ENCODE measurements at regions of chr17 and their contacts with region 1.

Region 1: DNA sequence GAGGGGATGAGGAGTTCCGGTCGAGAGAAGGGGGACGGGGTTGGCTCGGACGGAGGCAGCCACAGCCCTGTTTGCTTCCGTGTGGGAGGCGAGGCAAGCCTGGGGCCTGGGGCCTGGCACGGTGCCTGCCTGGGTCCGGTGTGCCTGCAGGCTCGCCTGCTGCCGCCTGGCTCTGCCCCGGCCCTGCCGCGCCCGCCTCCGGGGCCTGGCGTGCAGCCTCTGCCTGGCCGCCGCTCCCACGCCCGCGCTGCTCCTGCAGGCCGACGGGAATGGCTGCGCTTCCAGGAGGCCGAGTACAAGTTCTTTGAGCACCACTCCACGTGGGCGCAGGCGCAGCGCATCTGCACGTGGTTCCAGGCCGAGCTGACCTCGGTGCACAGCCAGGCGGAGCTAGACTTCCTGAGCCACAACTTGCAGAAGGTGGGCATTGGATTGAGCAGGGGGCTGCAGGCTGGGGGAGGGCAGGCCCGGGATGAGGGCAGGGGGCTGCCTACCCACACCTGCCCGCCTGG is 53.1 kb downstream of the MRC2 start:
- DNase-seq: peak in 1 of 2 donors; percentile 54
- H3K4me3 ChIP-seq: peak overlapping the region in 2 of 3 donors; percentile 19 to 55
- H3K27ac ChIP-seq: peak overlapping the region; percentile 35 to 80
- H3K4me1 ChIP-seq: no peaks in the 10 kb centered on the region
- H3K27me3 ChIP-seq: no peaks in the 10 kb centered on the region
- CTCF ChIP-seq: peak in 1 of 3 donors; percentile 8
- POLR2A ChIP-seq: no peak

Region 2: DNA sequence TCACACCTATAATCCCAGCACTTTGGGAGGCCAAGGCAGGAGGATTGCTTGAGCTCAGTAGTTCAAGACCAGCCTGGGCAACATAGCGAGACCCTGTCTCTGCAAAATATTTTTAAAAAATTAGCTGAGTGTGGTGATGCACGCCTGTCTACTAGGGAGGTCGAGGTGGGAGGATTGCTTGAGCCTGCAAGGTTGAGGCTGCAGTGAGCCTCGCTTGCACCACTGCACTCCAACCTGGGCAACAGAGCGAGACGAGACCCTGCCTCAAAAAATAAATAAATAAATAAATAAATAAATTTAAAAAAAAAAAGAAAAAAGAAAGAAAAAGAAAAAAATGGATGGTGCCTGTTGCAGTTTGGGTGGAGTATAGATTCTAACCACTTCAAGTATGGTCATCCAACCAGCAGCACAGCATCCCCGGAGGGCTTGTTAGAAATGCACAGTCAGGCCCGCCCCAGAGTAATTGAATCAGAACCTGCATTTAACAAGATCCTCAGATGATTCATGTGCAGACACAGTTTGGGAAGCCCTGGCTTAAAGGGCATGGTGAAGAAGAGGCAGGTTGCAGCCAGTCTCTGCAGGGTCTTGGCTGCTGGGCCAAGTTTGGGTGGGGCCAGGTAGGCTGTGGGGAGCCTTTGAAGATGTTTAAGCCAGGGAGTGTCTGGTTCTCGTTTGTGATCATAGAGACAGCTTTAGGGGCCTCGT is 12.4 kb before region 1 on chr17:
- intact Hi-C with region 1: loop called (anchors 1 kb)
- DNase-seq: no peak
- H3K4me3 ChIP-seq: no peak overlapping the region
- H3K27ac ChIP-seq: no peak overlapping the region
- H3K4me1 ChIP-seq: no peaks in the 10 kb centered on the region
- H3K27me3 ChIP-seq: no peaks in the 10 kb centered on the region
- CTCF ChIP-seq: no peak
- POLR2A ChIP-seq: no peak

Region 3: DNA sequence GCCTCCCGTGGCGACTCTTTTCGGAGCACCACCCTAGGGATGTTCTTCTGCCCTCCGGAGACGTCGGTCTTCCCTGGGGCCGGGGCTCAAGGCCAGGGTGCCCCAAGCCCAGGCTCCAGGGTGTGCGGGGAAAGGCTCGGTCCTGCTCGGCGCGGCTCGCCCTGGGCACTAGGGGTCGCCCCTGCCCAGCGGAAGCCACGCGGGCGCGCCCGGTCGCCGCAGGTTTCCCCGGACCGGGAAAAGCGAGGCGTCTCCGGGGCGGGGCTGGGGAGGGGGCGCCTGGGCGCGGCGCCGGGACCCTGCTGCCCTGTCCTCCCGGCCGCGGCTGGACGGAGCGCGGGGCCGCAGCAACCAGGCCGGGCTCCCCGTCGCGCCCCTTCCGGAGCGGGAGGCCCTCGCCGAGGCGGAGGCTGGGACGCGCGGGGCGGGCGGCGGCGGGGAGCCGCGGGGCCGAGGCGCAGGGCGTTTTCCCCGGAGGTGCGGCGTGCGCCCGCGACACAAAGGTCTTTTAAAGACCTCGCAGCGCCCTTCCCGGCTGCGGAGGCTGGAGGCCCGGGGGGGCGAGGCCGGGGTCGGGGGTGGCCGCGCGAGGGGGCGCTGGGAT is 23.3 kb after region 1 on chr17:
- intact Hi-C with region 1: no loop called
- DNase-seq: peak in 1 of 2 donors; percentile 78
- H3K4me3 ChIP-seq: peak overlapping the region; percentile 57 to 98 (median 76)
- H3K27ac ChIP-seq: peak overlapping the region; percentile 76 to 89
- H3K4me1 ChIP-seq: peaks cover 0 to 8% of the 10 kb centered on the region in 2 donors
- H3K27me3 ChIP-seq: no peaks in the 10 kb centered on the region
- CTCF ChIP-seq: peak; percentile 43 to 88 (median 62)
- POLR2A ChIP-seq: no peak